T-cell (primary cell): ENCODE measurements at regions of chr12 and their contacts with region 1.

Region 1: DNA sequence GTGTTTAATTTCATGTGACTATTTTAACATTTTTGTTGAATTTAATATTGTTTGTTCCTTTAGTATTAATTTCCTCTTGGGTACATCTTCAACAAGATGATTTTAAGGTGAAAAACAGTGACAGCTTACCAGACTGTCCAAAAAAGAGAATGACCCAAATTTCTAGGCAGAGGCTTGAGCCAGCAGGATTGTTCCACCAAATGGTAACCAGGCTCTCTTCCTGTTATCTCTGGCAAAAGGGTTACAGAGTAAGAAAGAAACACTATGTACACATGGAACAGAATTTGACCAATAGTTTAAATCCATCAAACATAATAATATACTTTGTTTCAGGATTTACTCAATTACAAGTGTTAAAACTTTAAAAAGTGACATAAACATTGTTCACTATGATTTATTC is 39.0 kb downstream of the YAF2 start:
- DNase-seq: no peak
- ATAC-seq: no peak
- H3K4me3 ChIP-seq: no peak overlapping the region
- H3K4me3 Mint-ChIP-seq: no peak overlapping the region
- H3K27ac ChIP-seq: no peak overlapping the region
- H3K27ac Mint-ChIP-seq: peak overlapping the region in 1 of 2 donors; percentile 34
- H3K4me1 ChIP-seq: no peaks in the 10 kb centered on the region
- H3K4me1 Mint-ChIP-seq: peaks cover 16 to 24% (median 17%) of the 10 kb centered on the region in 3 donors
- H3K27me3 ChIP-seq: no peaks in the 10 kb centered on the region
- H3K27me3 Mint-ChIP-seq: no peaks in the 10 kb centered on the region

Region 2: DNA sequence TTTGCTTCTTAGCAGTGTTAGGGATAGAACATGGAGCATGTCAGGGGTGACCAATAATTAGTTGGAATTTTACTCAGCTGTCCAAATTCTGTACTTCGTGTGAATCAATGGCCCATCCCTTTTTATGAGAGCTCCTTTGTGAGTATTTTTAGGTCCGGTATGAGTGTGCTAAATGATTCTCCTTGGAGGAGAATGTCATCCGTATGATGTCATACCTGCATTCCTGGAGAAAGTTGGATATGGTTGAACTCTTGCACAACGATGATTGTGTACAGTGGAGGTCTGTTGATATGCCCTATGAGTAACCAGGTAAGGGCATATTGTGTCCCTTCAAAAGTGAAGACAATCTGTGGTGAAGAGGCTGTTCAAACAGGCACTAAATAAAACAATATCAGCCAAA is 455.2 kb before region 1 on chr12:
- CTCF ChIA-PET with region 1: no interaction called
- POLR2A ChIA-PET with region 1: no interaction called
- DNase-seq: no peak
- ATAC-seq: no peak
- H3K4me3 ChIP-seq: no peak overlapping the region
- H3K4me3 Mint-ChIP-seq: no peak overlapping the region
- H3K27ac ChIP-seq: no peak overlapping the region
- H3K27ac Mint-ChIP-seq: no peak overlapping the region
- H3K4me1 ChIP-seq: no peaks in the 10 kb centered on the region
- H3K4me1 Mint-ChIP-seq: no peaks in the 10 kb centered on the region
- H3K27me3 ChIP-seq: no peaks in the 10 kb centered on the region
- H3K27me3 Mint-ChIP-seq: no peaks in the 10 kb centered on the region

Region 3: DNA sequence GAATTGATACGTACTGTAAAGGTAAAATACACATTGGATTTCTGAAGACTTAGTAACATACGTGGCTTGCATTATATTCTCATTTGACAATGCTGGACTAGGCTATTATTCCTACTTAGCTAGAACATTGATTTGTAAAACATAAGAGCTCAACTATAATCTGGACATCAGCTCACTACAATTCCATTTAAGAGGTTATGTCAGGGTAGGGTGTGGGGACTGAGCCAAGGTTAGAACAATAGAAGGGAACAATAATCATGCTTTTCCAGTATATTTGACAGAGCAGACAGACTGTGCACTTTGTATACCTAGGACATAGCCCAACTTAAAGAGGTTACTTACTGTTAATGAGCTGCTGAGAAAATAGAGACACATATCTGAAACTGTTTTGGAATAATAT is 116.1 kb after region 1 on chr12:
- CTCF ChIA-PET with region 1: interaction called in 1 of 2 experiments, 3 read pairs
- POLR2A ChIA-PET with region 1: interaction called in 1 of 2 experiments, 12 read pairs
- DNase-seq: no peak
- ATAC-seq: no peak
- H3K4me3 ChIP-seq: no peak overlapping the region
- H3K4me3 Mint-ChIP-seq: no peak overlapping the region
- H3K27ac ChIP-seq: no peak overlapping the region
- H3K27ac Mint-ChIP-seq: no peak overlapping the region
- H3K4me1 ChIP-seq: no peaks in the 10 kb centered on the region
- H3K4me1 Mint-ChIP-seq: no peaks in the 10 kb centered on the region
- H3K27me3 ChIP-seq: no peaks in the 10 kb centered on the region
- H3K27me3 Mint-ChIP-seq: no peaks in the 10 kb centered on the region